ENCODE measurements at regions of chr5 and their contacts with region 1.

Region 1: DNA sequence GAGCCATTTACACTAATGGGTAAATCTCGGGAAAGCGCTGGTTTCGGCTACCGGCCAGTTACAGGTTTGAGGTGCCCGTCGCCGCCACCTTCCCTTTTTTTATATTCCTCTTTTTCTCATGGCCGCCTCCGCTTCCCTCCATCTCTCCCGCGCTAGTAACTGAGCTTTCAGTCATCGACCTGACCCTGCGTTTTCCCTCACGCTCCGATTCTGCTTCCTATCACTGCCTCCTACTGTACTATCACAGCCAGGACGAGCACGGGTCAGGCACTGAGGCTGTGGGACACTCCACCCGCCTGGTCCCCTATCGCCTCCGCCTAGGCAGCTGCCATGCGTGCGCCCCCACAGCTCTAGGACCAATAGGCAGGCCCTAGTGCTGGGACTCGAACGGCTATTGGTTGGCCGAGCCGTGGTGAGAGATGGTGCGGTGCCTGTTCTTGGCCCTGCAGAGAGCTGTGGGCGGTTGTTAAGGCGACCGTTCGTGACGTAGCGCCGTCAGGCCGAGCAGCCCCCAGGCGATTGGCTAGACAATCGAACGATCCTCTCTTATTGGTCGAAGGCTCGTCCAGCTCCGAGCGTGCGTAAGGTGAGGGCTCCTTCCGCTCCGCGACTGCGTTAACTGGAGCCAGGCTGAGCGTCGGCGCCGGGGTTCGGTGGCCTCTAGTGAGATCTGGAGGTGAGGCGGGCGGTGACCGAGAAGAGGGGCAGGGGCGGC is at the start of gene HMGCR:
- DNase-seq: peak; percentile 99 to 100
- H3K4me3 ChIP-seq: peak within 1 kb of the TSS; percentile 89
- H3K4me3 Mint-ChIP-seq: no peak within 1 kb of the TSS
- H3K27ac Mint-ChIP-seq: no peak within 1 kb of the TSS
- H3K4me1 ChIP-seq: peaks cover 28% of the 10 kb centered on the region
- H3K4me1 Mint-ChIP-seq: peaks cover 14% of the 10 kb centered on the region
- H3K27me3 ChIP-seq: no peaks in the 10 kb centered on the region
- H3K27me3 Mint-ChIP-seq: no peaks in the 10 kb centered on the region
- CTCF ChIP-seq: peak in 1 of 2 experiments; percentile 59
- total RNA-seq, gene HMGCR: 164 and 167 TPM in 2 replicates

Region 2: GRCh38 chr5:73448463-73449136 is 1888.2 kb before region 1 on chr5 and contains the start of gene FOXD1:
- CTCF ChIA-PET with region 1: no interaction called
- POLR2A ChIA-PET with region 1: interaction called, 12 read pairs
- intact Hi-C with region 1: no loop called
- DNase-seq: peak; percentile 78 to 82
- H3K4me3 ChIP-seq: peak within 1 kb of the TSS; percentile 68
- H3K4me3 Mint-ChIP-seq: peak within 1 kb of the TSS; percentile 81
- H3K27ac Mint-ChIP-seq: peak within 1 kb of the TSS; percentile 32
- H3K4me1 ChIP-seq: peaks cover 11% of the 10 kb centered on the region
- H3K4me1 Mint-ChIP-seq: no peaks in the 10 kb centered on the region
- H3K27me3 ChIP-seq: peaks cover 5% of the 10 kb centered on the region
- H3K27me3 Mint-ChIP-seq: peaks cover 25% of the 10 kb centered on the region
- CTCF ChIP-seq: no peak
- total RNA-seq, gene FOXD1: 2.8 and 3.1 TPM in 2 replicates

Region 3: DNA sequence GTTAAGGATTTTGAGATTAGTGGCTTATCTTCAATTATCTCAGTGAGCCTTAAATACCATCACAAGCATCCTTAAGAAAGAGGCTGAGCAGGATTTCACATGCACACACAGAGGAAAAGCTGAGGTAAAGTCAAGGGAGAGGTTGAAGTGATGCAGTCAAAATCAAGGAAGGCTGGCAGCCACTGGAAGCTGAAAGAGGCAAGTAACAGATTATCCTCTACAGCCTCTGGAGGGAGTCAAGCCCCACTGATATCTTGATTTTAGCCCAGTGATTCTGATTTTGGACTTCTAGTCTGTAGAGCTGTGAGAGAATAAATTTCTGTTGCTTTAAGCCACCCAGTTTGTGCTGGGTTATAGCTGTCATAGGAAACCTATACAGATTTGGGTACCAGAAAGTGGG is 180.2 kb before region 1 on chr5:
- CTCF ChIA-PET with region 1: interaction called, 16 read pairs
- POLR2A ChIA-PET with region 1: no interaction called
- intact Hi-C with region 1: loop called (anchors 1 kb)
- DNase-seq: peak; percentile 66 to 75
- H3K4me3 ChIP-seq: no peak overlapping the region
- H3K4me3 Mint-ChIP-seq: no peak overlapping the region
- H3K27ac Mint-ChIP-seq: no peak overlapping the region
- H3K4me1 ChIP-seq: peaks cover 10% of the 10 kb centered on the region
- H3K4me1 Mint-ChIP-seq: peaks cover 21% of the 10 kb centered on the region
- H3K27me3 ChIP-seq: no peaks in the 10 kb centered on the region
- H3K27me3 Mint-ChIP-seq: no peaks in the 10 kb centered on the region
- CTCF ChIP-seq: peak; percentile 50 to 58

Region 4: DNA sequence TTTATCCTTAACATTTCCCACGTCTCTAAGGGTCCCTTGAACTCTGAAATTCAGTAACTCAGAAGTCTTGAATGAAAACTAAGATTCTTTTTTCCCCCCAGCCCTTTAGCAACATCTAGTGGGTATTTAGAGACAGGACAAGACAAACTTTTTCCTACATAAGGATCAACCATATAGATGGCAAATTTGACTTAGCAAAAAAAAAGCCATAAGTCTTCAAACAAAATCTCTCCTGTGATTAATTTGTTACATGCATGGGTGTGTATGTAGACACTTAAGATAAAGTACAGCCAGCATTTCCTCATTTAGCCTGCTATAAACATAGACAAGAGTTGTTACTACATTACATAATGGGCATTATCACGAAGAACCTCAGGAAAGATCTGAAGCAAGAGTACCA is 71.1 kb before region 1 on chr5:
- CTCF ChIA-PET with region 1: interaction called, 13 read pairs
- POLR2A ChIA-PET with region 1: interaction called, 3 read pairs
- intact Hi-C with region 1: loop called (anchors 2 kb)
- DNase-seq: peak in 1 of 2 experiments; percentile 42
- H3K4me3 ChIP-seq: no peak overlapping the region
- H3K4me3 Mint-ChIP-seq: no peak overlapping the region
- H3K27ac Mint-ChIP-seq: peak overlapping the region; percentile 43
- H3K4me1 ChIP-seq: peaks cover 18% of the 10 kb centered on the region
- H3K4me1 Mint-ChIP-seq: peaks cover 17% of the 10 kb centered on the region
- H3K27me3 ChIP-seq: no peaks in the 10 kb centered on the region
- H3K27me3 Mint-ChIP-seq: no peaks in the 10 kb centered on the region
- CTCF ChIP-seq: peak; percentile 60 to 88

Region 5: DNA sequence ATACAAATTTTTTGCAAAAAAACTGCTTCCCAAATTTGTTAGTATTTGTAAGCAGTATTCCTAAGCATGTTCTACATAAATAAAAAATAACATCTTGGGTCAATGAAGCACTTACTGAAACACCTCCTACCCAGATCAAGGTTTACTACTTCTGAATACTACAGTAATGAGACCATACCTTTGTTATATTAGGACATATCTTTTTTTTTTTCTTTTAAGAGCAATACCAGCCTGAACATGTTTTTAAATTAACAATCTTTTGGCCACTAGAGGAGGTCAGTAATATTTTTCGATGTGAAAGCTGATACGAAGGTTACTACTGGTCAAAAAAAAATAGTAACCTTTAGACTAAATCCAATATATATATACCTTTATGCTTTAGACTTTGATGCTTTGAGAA is 101.9 kb after region 1 on chr5:
- CTCF ChIA-PET with region 1: no interaction called
- POLR2A ChIA-PET with region 1: interaction called, 11 read pairs
- intact Hi-C with region 1: no loop called
- DNase-seq: no peak
- H3K4me3 ChIP-seq: no peak overlapping the region
- H3K4me3 Mint-ChIP-seq: no peak overlapping the region
- H3K27ac Mint-ChIP-seq: no peak overlapping the region
- H3K4me1 ChIP-seq: no peaks in the 10 kb centered on the region
- H3K4me1 Mint-ChIP-seq: no peaks in the 10 kb centered on the region
- H3K27me3 ChIP-seq: no peaks in the 10 kb centered on the region
- H3K27me3 Mint-ChIP-seq: no peaks in the 10 kb centered on the region
- CTCF ChIP-seq: no peak

Region 6: GRCh38 chr5:75632321-75632720 is 295.5 kb after region 1 on chr5:
- CTCF ChIA-PET with region 1: no interaction called
- POLR2A ChIA-PET with region 1: interaction called, 11 read pairs
- intact Hi-C with region 1: no loop called
- DNase-seq: no peak
- H3K4me3 ChIP-seq: no peak overlapping the region
- H3K4me3 Mint-ChIP-seq: no peak overlapping the region
- H3K27ac Mint-ChIP-seq: no peak overlapping the region
- H3K4me1 ChIP-seq: no peaks in the 10 kb centered on the region
- H3K4me1 Mint-ChIP-seq: no peaks in the 10 kb centered on the region
- H3K27me3 ChIP-seq: no peaks in the 10 kb centered on the region
- H3K27me3 Mint-ChIP-seq: no peaks in the 10 kb centered on the region
- CTCF ChIP-seq: no peak